ENCODE measurements at regions of chr11 and their contacts with region 1.

Region 1: GRCh38 chr11:128831174-128832120 is 35.6 kb downstream of the KCNJ1 start:
- DNase-seq: peak; percentile 76
- H3K4me3 Mint-ChIP-seq: peak overlapping the region; percentile 44
- H3K27ac Mint-ChIP-seq: peak overlapping the region; percentile 50
- H3K4me1 Mint-ChIP-seq: peaks cover 8% of the 10 kb centered on the region
- H3K27me3 Mint-ChIP-seq: no peaks in the 10 kb centered on the region
- CTCF ChIP-seq: peak; percentile 64

Region 2: DNA sequence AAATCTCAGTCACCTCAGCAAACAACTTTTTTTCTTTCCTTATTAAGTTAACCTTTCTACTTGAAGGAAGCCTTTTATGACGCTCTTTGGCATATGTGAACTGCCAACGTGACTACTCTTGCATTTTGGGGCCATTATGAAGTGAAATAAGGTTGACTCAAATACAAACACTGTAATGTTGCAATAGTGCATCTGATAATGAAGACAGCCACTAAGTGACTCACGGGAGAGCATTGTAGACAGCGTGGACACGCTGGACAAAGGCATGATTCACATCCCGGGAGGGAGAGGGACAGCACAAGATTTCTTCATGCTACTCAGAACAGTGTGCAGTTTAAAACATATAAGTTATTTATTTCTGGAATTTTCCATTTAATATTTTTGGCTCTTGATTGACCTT is 804.9 kb before region 1 on chr11:
- CTCF ChIA-PET with region 1: no interaction called
- intact Hi-C with region 1: loop called (anchors 2 kb)
- DNase-seq: peak; percentile 42
- H3K4me3 Mint-ChIP-seq: no peak overlapping the region
- H3K27ac Mint-ChIP-seq: peak overlapping the region; percentile 71
- H3K4me1 Mint-ChIP-seq: peaks cover 20% of the 10 kb centered on the region
- H3K27me3 Mint-ChIP-seq: no peaks in the 10 kb centered on the region
- CTCF ChIP-seq: no peak

Region 3: GRCh38 chr11:128157423-128158298 is 673.8 kb before region 1 on chr11:
- CTCF ChIA-PET with region 1: interaction called, 12 read pairs
- intact Hi-C with region 1: loop called (anchors 5 kb)
- DNase-seq: peak; percentile 57
- H3K4me3 Mint-ChIP-seq: no peak overlapping the region
- H3K27ac Mint-ChIP-seq: no peak overlapping the region
- H3K4me1 Mint-ChIP-seq: no peaks in the 10 kb centered on the region
- H3K27me3 Mint-ChIP-seq: no peaks in the 10 kb centered on the region
- CTCF ChIP-seq: peak; percentile 79

Region 4: DNA sequence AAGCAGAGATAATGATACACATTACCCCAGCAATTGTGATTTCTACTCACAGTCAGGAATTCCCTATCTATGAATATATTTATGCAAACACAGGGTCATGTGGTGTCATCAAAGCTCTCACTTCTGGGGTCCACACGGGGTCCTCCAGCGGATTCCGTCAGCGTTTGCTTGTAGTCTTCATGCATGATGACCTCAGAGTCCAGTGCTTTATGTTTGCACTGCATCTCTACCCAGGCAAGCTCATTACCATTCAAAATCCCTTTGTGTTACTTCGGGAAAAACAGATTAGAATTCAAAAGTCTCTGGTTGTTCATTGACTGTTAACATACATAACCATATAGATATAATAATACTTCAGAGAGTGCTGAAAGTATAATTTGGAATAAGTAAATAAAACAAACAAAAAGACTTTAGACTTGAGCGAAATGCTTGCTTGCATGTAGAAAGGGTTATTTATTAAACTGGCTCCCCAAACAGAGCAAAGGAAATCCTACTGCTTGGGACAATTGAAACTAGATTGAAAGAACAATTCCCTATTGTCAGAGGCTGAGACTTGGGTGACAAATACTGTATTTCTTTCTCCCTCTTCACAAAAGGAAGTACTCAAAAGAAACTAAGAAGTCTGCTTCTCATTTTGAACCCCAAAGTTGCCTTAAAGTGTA is 667.2 kb before region 1 on chr11:
- CTCF ChIA-PET with region 1: no interaction called
- intact Hi-C with region 1: loop called (anchors 2 kb)
- DNase-seq: no peak
- H3K4me3 Mint-ChIP-seq: no peak overlapping the region
- H3K27ac Mint-ChIP-seq: peak overlapping the region; percentile 92
- H3K4me1 Mint-ChIP-seq: peaks cover 26% of the 10 kb centered on the region
- H3K27me3 Mint-ChIP-seq: no peaks in the 10 kb centered on the region
- CTCF ChIP-seq: no peak

Region 5: GRCh38 chr11:128653801-128654231 is 177.6 kb before region 1 on chr11:
- CTCF ChIA-PET with region 1: no interaction called
- intact Hi-C with region 1: loop called (anchors 5 kb)
- DNase-seq: peak; percentile 25
- H3K4me3 Mint-ChIP-seq: peak overlapping the region; percentile 11
- H3K27ac Mint-ChIP-seq: peak overlapping the region; percentile 84
- H3K4me1 Mint-ChIP-seq: peaks cover 11% of the 10 kb centered on the region
- H3K27me3 Mint-ChIP-seq: no peaks in the 10 kb centered on the region
- CTCF ChIP-seq: no peak

Region 6: GRCh38 chr11:128936606-128937251 is 105.3 kb after region 1 on chr11:
- CTCF ChIA-PET with region 1: no interaction called
- intact Hi-C with region 1: no loop called
- DNase-seq: no peak
- H3K4me3 Mint-ChIP-seq: no peak overlapping the region
- H3K27ac Mint-ChIP-seq: no peak overlapping the region
- H3K4me1 Mint-ChIP-seq: no peaks in the 10 kb centered on the region
- H3K27me3 Mint-ChIP-seq: peaks cover 27% of the 10 kb centered on the region
- CTCF ChIP-seq: no peak

Region 7: DNA sequence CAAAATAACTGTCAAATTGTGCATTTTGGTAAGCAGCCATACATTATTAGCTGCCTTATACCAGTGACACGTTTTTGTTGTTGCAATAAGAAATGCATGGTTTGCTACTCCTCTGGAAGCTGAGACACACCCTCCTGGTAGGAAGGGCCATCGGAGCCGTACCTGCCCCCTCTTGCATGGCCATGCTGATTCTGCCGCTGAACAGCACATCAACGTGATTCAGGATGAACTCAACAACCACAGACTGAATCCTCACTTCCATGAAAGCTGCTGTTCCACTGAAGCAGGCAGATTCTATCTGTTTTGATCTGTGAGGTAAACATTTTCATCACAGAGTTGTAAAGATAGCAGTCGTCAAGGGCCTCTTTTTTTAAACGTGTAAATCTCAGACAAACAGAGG is 149.8 kb after region 1 on chr11:
- CTCF ChIA-PET with region 1: no interaction called
- intact Hi-C with region 1: no loop called
- DNase-seq: no peak
- H3K4me3 Mint-ChIP-seq: no peak overlapping the region
- H3K27ac Mint-ChIP-seq: no peak overlapping the region
- H3K4me1 Mint-ChIP-seq: no peaks in the 10 kb centered on the region
- H3K27me3 Mint-ChIP-seq: no peaks in the 10 kb centered on the region
- CTCF ChIP-seq: no peak

Region 8: GRCh38 chr11:129391821-129392220 is 560.4 kb after region 1 on chr11:
- CTCF ChIA-PET with region 1: no interaction called
- intact Hi-C with region 1: no loop called
- DNase-seq: no peak
- H3K4me3 Mint-ChIP-seq: peak overlapping the region; percentile 51
- H3K27ac Mint-ChIP-seq: peak overlapping the region; percentile 87
- H3K4me1 Mint-ChIP-seq: peaks cover 65% of the 10 kb centered on the region
- H3K27me3 Mint-ChIP-seq: no peaks in the 10 kb centered on the region
- CTCF ChIP-seq: no peak